ENCODE measurements at regions of chr3 and their contacts with region 1.

Region 1: GRCh38 chr3:57755668-57756527 is at the start of gene SLMAP:
- DNase-seq: peak; percentile 99
- ATAC-seq: peak; percentile 99
- H3K4me3 ChIP-seq: peak within 1 kb of the TSS; percentile 51 to 93
- H3K27ac ChIP-seq: peak within 1 kb of the TSS; percentile 29 to 36
- H3K4me1 ChIP-seq: peaks cover 0 to 4% of the 10 kb centered on the region in 2 donors
- H3K27me3 ChIP-seq: no peaks in the 10 kb centered on the region
- total RNA-seq, gene SLMAP: 195 to 546 TPM

Region 2: GRCh38 chr3:57227204-57227929 is 528.5 kb before region 1 on chr3 and contains the start of gene APPL1:
- intact Hi-C with region 1: loop called in 1 of 2 experiments (anchors 5 kb)
- DNase-seq: peak; percentile 95 to 97
- ATAC-seq: peak; percentile 99
- H3K4me3 ChIP-seq: peak within 1 kb of the TSS; percentile 82 to 89
- H3K27ac ChIP-seq: peak within 1 kb of the TSS; percentile 20 to 85
- H3K4me1 ChIP-seq: peaks cover 0 to 1% of the 10 kb centered on the region in 2 donors
- H3K27me3 ChIP-seq: no peaks in the 10 kb centered on the region
- total RNA-seq, gene APPL1: 40.6 to 54.7 TPM

Region 3: GRCh38 chr3:57382933-57383332 is 373.0 kb before region 1 on chr3:
- intact Hi-C with region 1: no loop called
- DNase-seq: no peak
- ATAC-seq: no peak
- H3K4me3 ChIP-seq: no peak overlapping the region
- H3K27ac ChIP-seq: no peak overlapping the region
- H3K4me1 ChIP-seq: no peaks in the 10 kb centered on the region
- H3K27me3 ChIP-seq: no peaks in the 10 kb centered on the region

Region 4: DNA sequence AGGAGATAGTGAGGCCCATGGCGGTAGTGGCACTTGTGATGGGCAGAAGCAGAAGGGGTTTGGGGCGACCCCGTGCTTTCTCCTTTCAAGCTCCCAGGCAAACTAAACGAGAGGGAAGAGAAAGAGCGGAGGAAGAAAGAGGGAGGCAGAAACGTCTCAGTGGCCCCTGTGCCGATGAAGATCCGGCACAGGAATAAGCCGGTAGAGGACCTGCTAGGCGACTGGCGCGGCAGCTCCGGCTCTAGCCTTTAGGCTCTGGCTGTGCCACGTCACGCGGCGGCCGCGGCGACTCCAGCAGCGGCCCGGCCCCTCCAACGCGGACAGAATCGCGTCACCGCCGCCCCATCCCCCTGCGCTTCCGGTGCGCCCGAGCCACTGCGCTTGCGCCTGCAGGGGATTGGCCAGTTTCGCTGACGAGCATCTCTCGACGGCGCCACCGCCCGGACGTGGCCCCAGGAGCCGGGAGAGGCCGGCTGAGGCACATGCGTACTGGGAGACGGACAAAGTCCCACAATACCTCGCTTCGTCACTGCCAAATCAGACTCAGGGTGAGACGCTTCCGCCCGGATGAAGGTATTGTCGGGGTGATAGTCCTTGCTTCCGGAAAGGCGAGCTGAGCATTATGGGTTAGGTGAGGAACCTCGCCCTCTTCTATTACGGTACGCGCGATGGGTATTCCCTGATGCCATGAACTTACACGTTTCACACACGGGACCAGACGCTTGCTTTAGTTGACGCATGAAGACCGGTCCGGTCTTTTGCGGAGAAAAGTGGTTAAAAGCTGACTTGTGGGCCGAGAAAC is 158.6 kb before region 1 on chr3 and contains the start of gene ARF4:
- intact Hi-C with region 1: loop called in 1 of 2 experiments (anchors 2 kb)
- DNase-seq: peak; percentile 100
- ATAC-seq: peak; percentile 99
- H3K4me3 ChIP-seq: peak within 1 kb of the TSS; percentile 87 to 95
- H3K27ac ChIP-seq: peak within 1 kb of the TSS; percentile 85 to 97
- H3K4me1 ChIP-seq: peaks cover 0 to 3% of the 10 kb centered on the region in 2 donors
- H3K27me3 ChIP-seq: no peaks in the 10 kb centered on the region
- total RNA-seq, gene ARF4: 148 TPM

Region 5: DNA sequence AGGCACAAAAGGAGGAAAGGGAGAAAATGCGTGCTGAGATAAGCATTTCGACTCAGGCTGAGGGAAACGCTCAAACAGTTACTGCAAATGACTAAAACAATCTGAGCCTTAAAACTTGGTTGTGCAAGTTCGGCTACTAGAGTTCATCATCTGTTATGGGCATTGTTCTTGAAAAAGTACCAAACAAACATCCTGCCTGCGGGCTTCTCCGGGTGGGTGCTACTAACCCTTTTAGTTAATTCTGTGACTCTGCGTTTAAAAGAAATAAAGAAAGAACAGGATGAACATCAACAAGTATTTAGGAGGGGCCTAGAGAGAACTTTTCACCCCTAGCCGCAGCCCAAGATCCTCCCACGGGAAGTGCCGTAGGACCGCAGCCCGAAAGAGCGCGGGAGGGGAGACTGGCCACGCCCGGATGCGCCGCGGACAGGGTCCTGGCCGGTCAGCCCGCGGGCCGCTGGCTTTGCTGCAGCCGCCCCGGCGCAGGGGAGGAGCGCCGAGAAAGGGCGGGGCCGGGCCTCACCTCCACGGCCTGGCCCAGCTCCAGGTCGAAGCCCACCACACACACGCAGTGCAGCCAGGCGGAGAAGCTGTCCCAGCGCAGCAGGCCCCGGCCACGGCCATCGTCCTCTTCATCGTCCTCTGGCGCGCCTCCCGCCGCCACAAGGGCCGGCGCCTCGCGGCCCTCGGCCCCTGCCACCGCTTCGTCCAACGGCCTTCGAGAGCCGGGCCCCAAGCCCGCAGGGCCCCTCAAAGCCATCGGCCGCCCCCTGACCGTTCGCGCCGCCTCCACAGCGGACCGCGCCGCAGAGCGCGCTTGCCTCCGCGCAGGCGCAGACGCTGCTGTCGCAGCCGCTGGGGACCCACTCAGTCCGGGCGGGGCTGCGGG is 63.4 kb before region 1 on chr3 and contains the start of gene DENND6A:
- intact Hi-C with region 1: loop called (anchors 2 to 5 kb)
- DNase-seq: peak; percentile 98 to 99
- ATAC-seq: peak; percentile 97
- H3K4me3 ChIP-seq: peak within 1 kb of the TSS; percentile 63 to 76
- H3K27ac ChIP-seq: peak within 1 kb of the TSS; percentile 84 to 95
- H3K4me1 ChIP-seq: peaks cover 3 to 9% of the 10 kb centered on the region in 2 donors
- H3K27me3 ChIP-seq: no peaks in the 10 kb centered on the region
- total RNA-seq, gene DENND6A: 38.6 to 41.0 TPM